ENCODE measurements at regions of chr14 and their contacts with region 1.

Region 1: GRCh38 chr14:63276492-63277342 is 42.0 kb downstream of the GPHB5 start:
- DNase-seq: no peak
- H3K4me3 ChIP-seq: no peak overlapping the region
- H3K27me3 ChIP-seq: no peaks in the 10 kb centered on the region
- CTCF ChIP-seq: peak; percentile 75

Region 2: DNA sequence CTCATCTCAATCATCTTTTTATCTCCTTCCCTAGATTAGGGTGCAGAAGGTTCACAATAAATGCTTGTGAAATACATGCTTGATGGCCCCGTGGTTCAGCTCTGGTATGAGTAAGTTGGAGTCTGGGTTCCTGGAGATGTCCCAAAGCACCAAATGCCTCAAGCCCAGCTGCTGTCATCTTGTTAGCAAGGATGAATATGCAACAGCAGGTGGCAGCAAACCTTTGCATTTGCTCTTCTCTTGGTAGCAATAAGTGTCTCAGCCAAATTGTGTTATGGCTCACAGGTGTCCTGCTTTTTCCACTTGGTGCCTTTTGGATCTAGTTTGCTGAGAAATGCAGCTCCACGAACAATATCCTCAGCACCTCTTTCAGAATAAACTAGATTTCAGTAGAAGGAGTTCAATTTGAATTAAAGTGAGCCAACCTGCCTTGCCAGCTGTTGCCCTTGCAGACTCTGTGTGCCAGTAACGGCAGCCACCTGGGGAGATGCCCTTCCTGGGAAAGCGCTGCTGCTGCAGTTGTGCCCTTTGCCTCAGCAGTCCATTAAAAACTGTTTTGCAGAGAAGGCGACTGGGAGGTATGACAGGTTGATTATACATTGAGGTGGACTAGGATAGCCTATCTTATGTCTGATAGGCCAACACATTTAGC is 1097.2 kb before region 1 on chr14:
- CTCF ChIA-PET with region 1: interaction called, 20 read pairs
- POLR2A ChIA-PET with region 1: interaction called, 4 read pairs
- DNase-seq: peak; percentile 36
- H3K4me3 ChIP-seq: no peak overlapping the region
- H3K27me3 ChIP-seq: no peaks in the 10 kb centered on the region
- CTCF ChIP-seq: peak; percentile 68

Region 3: DNA sequence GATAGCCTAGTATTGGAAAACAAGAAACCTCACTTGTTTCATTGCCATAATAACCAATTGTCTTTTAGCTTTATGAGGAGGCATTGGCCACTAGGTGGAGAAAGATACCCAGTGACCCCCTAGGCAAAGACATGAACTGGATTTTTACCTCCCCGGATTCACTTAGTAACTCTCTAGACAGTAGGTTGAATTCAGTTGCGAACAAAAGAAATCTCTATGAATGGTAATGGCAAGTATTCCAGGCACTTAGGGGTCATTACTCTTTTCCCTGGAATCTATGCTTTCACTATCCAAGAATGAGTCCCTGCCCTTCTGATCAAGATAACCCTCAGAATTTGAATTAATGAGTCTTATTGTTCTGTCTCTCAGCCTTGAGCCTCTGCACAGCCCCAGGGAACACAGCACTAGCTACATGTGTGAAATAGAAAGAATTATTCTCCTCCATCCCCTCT is 101.9 kb before region 1 on chr14:
- CTCF ChIA-PET with region 1: interaction called, 46 read pairs
- POLR2A ChIA-PET with region 1: no interaction called
- DNase-seq: peak; percentile 54
- H3K4me3 ChIP-seq: no peak overlapping the region
- H3K27me3 ChIP-seq: no peaks in the 10 kb centered on the region
- CTCF ChIP-seq: peak; percentile 70

Region 4: DNA sequence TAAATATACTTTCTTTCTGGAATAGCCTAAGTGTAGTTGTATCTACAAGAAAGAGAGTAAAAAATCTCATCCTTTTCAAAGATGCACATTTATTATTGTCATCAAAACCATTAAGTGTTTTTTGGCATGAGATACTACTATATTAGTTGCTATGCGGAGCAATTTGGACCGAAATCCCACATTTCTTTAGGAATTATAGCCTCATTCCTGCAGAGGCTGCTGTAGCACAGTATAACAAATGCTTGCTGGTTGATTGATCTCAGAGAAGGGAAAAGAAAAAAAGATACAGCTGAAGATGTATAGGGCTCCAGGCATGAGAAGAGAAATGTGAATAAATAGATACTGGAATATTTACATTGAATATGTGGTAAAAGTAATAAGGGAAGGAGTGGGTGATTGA is 36.5 kb before region 1 on chr14:
- CTCF ChIA-PET with region 1: no interaction called
- POLR2A ChIA-PET with region 1: no interaction called
- DNase-seq: no peak
- H3K4me3 ChIP-seq: no peak overlapping the region
- H3K27me3 ChIP-seq: no peaks in the 10 kb centered on the region
- CTCF ChIP-seq: no peak